ENCODE measurements at regions of chr10 and their contacts with region 1.

Region 1: GRCh38 chr10:103333925-103334520 is 16.9 kb downstream of the PCGF6 start:
- DNase-seq: no peak
- H3K4me3 ChIP-seq: no peak overlapping the region
- CTCF ChIP-seq: peak; percentile 20

Region 2: GRCh38 chr10:103316087-103316486 is 17.9 kb before region 1 on chr10:
- CTCF ChIA-PET with region 1: interaction called, 24 read pairs
- POLR2A ChIA-PET with region 1: no interaction called
- DNase-seq: no peak
- H3K4me3 ChIP-seq: no peak overlapping the region
- CTCF ChIP-seq: no peak

Region 3: DNA sequence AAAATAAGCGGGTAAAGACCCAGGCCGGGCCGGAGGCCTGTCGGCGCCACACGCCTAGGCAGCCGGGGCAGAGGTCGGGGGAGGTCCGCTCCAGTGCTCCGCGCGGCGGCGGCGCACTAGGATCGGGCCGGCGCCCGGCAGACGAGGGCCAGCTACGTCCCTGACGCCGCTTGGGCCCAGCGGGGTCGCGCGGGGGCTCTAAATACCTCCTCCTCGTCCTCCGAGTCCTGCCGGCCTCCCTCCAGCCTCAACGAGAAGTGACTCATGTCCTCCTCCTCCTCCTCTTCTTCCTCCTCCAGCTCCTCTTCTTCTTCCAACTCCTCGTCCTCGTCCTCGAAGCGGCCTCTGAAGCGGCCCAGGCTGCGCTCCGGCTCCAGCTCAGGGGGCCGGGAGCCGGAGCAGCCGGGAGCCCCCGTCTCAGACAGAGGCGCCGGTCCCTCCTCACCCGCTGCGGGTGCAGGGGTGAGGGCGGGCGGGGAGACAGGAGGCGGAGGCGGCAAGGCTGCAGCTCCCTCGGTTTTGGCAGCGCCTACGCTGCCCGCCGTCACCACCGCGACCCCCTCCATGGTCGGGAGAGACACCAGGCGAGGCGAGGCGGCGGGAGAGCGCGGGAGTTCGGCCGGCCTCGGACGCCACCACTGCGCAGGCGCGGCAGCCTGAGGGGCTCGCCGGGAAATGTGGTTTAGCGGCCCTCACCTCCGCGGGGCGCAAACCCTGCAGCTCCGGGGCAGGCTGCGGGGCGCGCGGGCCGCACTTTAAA is 16.7 kb after region 1 on chr10 and contains the start of gene PCGF6:
- CTCF ChIA-PET with region 1: interaction called, 23 read pairs
- POLR2A ChIA-PET with region 1: no interaction called
- DNase-seq: no peak
- H3K4me3 ChIP-seq: peak within 1 kb of the TSS; percentile 73
- CTCF ChIP-seq: peak; percentile 19

Measured in AG04449 (cell line).